B cell (primary cell): ENCODE measurements at regions of chr16 and their contacts with region 1.

Region 1: DNA sequence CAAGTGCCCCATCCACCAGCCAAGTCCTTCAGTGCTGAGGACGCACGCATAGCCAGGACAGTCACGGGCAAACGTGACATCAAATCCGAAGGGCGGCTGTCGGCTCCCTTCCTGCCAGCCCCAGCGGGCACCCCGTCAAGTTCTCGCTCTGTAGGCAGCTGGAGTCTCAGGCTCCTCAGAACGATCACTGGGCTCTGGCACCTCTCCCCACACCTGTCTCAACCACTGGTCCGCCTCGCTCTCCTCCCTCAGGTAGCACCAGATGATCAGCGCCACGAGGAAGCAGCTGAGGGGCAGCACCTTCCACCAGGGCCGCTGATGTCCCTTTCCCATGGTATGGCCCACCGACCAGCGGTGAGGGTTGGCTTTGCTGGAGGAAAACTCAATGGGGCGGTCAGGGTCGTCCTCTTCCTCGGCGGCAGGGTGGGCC is 421 bp downstream of the UQCC4 start:
- DNase-seq: no peak
- ATAC-seq: no peak
- H3K4me3 ChIP-seq: peak overlapping the region; percentile 74 to 95 (median 88)
- H3K4me3 Mint-ChIP-seq: peak overlapping the region; percentile 94
- H3K27ac ChIP-seq: peak overlapping the region; percentile 86 to 92
- H3K27ac Mint-ChIP-seq: peak overlapping the region; percentile 99
- H3K4me1 ChIP-seq: peaks cover 6 to 19% of the 10 kb centered on the region in 2 donors
- H3K4me1 Mint-ChIP-seq: peaks cover 22% of the 10 kb centered on the region
- H3K27me3 ChIP-seq: no peaks in the 10 kb centered on the region
- H3K27me3 Mint-ChIP-seq: no peaks in the 10 kb centered on the region
- CTCF ChIP-seq: no peak

Region 2: GRCh38 chr16:1258906-1259759 is 161.0 kb before region 1 on chr16:
- CTCF ChIA-PET with region 1: no interaction called
- POLR2A ChIA-PET with region 1: no interaction called
- intact Hi-C with region 1: no loop called
- DNase-seq: no peak
- ATAC-seq: peak; percentile 10
- H3K4me3 ChIP-seq: no peak overlapping the region
- H3K4me3 Mint-ChIP-seq: peak overlapping the region; percentile 49
- H3K27ac ChIP-seq: no peak overlapping the region
- H3K27ac Mint-ChIP-seq: no peak overlapping the region
- H3K4me1 ChIP-seq: peaks cover 6 to 8% of the 10 kb centered on the region in 2 donors
- H3K4me1 Mint-ChIP-seq: peaks cover 4% of the 10 kb centered on the region
- H3K27me3 ChIP-seq: peaks cover 0 to 62% (median 12%) of the 10 kb centered on the region in 4 experiments
- H3K27me3 Mint-ChIP-seq: peaks cover 21% of the 10 kb centered on the region
- CTCF ChIP-seq: no peak

Region 3: GRCh38 chr16:1308977-1309885 is 110.9 kb before region 1 on chr16 and contains the start of gene UBE2I:
- CTCF ChIA-PET with region 1: no interaction called
- POLR2A ChIA-PET with region 1: interaction called, 4 read pairs
- intact Hi-C with region 1: loop called (anchors 2 kb)
- DNase-seq: peak; percentile 100
- ATAC-seq: peak; percentile 74
- H3K4me3 ChIP-seq: peak within 1 kb of the TSS; percentile 80 to 90 (median 86)
- H3K4me3 Mint-ChIP-seq: peak within 1 kb of the TSS; percentile 99
- H3K27ac ChIP-seq: peak within 1 kb of the TSS; percentile 99 to 100
- H3K27ac Mint-ChIP-seq: peak within 1 kb of the TSS; percentile 100
- H3K4me1 ChIP-seq: peaks cover 41 to 65% of the 10 kb centered on the region in 2 donors
- H3K4me1 Mint-ChIP-seq: peaks cover 52% of the 10 kb centered on the region
- H3K27me3 ChIP-seq: no peaks in the 10 kb centered on the region
- H3K27me3 Mint-ChIP-seq: no peaks in the 10 kb centered on the region
- CTCF ChIP-seq: no peak
- total RNA-seq, gene UBE2I: 253 and 265 TPM in 2 replicates

Region 4: DNA sequence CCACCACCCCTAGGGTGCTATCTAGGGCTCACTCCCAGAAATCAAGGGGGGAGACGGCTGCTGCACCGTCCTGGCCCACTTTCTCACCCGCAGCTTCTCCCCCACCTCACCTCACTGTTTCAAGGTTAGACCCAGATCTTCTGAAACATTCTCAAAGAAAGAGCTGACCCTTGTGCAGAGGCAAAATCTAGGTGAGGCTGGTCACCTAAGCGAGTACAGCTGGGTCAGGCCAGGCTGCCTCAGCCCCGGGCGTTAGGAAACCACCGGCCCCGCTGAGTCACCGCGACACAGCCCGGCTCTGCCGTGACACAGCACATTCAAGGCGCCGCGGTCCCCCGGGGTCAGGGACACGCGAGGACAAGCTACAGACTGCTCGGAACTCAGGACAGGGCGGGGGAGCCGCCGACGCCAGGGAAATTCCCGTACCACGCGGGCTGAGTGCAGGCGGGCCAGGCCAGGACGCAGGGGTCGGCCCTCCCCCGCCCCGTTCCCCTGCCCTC is 41.3 kb before region 1 on chr16:
- CTCF ChIA-PET with region 1: interaction called, 3 read pairs
- POLR2A ChIA-PET with region 1: interaction called, 8 read pairs
- intact Hi-C with region 1: loop called (anchors 2 kb)
- DNase-seq: peak; percentile 75
- ATAC-seq: peak; percentile 55
- H3K4me3 ChIP-seq: peak overlapping the region in 3 of 5 experiments; percentile 39 to 52 (median 51)
- H3K4me3 Mint-ChIP-seq: peak overlapping the region; percentile 77
- H3K27ac ChIP-seq: peak overlapping the region in 1 of 2 donors; percentile 33
- H3K27ac Mint-ChIP-seq: peak overlapping the region; percentile 16
- H3K4me1 ChIP-seq: peaks cover 10 to 14% of the 10 kb centered on the region in 2 donors
- H3K4me1 Mint-ChIP-seq: peaks cover 15% of the 10 kb centered on the region
- H3K27me3 ChIP-seq: no peaks in the 10 kb centered on the region
- H3K27me3 Mint-ChIP-seq: no peaks in the 10 kb centered on the region
- CTCF ChIP-seq: no peak

Region 5: DNA sequence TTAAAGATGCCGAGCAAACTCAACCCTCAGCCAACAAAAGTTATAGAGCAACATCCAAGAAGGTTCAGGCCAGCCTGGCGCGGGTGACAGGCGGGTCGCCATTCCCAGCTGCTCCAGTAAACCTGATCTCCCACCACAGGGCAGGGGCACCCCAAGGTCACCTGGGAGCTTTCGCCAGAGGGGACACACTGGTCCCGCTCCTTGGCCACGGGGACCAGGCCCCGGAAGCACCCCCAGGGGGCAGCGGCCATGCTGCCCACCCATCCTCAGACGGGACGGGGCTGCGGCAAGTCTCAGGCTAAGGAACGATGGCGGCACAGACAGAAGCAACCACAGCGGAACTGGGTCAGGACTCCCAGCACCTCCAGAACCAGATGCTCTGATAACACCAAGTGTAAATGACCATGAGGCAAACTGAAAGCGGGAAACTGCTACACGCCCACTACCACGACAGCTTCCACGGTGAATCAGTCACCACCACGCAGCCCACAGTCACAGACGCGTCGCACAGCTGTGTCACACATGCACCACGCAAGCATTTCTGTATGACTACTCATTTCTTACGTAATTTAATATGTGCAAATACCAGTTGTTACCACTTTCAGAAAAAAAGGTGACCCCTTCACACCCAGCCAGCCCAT is 38.3 kb after region 1 on chr16:
- CTCF ChIA-PET with region 1: interaction called, 3 read pairs
- POLR2A ChIA-PET with region 1: interaction called, 13 read pairs
- intact Hi-C with region 1: no loop called
- DNase-seq: no peak
- ATAC-seq: peak; percentile 60
- H3K4me3 ChIP-seq: peak overlapping the region in 3 of 5 experiments; percentile 38 to 51 (median 50)
- H3K4me3 Mint-ChIP-seq: peak overlapping the region; percentile 81
- H3K27ac ChIP-seq: peak overlapping the region; percentile 98
- H3K27ac Mint-ChIP-seq: peak overlapping the region; percentile 97
- H3K4me1 ChIP-seq: peaks cover 31 to 34% of the 10 kb centered on the region in 2 donors
- H3K4me1 Mint-ChIP-seq: peaks cover 28% of the 10 kb centered on the region
- H3K27me3 ChIP-seq: no peaks in the 10 kb centered on the region
- H3K27me3 Mint-ChIP-seq: no peaks in the 10 kb centered on the region
- CTCF ChIP-seq: no peak

Region 6: DNA sequence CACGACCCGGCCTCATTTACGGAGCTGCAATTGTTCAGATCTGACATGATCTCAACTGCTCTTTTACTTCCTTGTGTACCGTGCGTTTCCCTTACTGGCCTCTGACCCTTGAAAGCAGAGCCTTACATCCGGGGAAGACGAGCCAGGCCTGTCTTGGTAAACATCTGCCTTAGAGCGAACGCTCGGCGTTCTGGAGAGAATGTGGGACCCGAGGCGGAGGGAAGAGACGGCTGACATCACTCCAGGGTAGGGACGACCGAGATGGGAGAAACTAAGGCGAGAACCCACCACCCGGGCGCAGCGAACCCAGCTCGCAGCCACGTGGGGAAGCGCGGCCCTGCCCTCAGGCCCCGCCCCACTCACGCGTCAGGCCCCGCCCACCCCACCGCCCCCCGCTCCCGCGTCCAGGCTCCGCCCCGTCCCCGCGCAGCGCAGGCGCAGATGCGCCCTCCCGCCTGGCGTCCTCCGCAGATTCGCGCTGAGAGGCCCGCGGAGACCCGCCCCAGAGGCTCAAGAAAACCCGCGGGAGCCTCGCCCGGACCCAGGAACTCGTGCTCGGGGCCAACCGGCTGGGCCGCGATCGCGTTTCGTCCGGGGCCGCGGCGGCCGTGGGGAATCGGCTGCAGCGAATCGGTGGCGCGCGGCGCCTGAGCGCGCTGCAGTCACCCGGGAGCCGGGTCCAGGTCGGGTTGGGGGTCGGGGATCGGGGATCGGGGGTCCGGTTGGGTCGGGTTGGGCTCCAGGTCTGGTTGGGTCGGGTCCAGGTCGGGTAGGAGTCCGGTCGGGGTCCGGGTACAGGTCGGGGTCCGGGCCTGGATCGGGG is 73.0 kb after region 1 on chr16 and contains the start of gene TELO2:
- CTCF ChIA-PET with region 1: no interaction called
- POLR2A ChIA-PET with region 1: interaction called, 21 read pairs
- intact Hi-C with region 1: loop called (anchors 1 kb)
- DNase-seq: peak; percentile 92
- ATAC-seq: peak; percentile 89
- H3K4me3 ChIP-seq: peak within 1 kb of the TSS; percentile 36 to 87 (median 75)
- H3K4me3 Mint-ChIP-seq: peak within 1 kb of the TSS; percentile 97
- H3K27ac ChIP-seq: peak within 1 kb of the TSS; percentile 95 to 96
- H3K27ac Mint-ChIP-seq: peak within 1 kb of the TSS; percentile 99
- H3K4me1 ChIP-seq: peaks cover 17 to 25% of the 10 kb centered on the region in 2 donors
- H3K4me1 Mint-ChIP-seq: peaks cover 17% of the 10 kb centered on the region
- H3K27me3 ChIP-seq: no peaks in the 10 kb centered on the region
- H3K27me3 Mint-ChIP-seq: no peaks in the 10 kb centered on the region
- CTCF ChIP-seq: no peak
- total RNA-seq, gene TELO2: 81.9 and 88.4 TPM in 2 replicates

Region 7: GRCh38 chr16:1782352-1783091 is 362.4 kb after region 1 on chr16 and contains the starts of genes NUBP2 and SPSB3:
- CTCF ChIA-PET with region 1: interaction called, 4 read pairs
- POLR2A ChIA-PET with region 1: interaction called, 7 read pairs
- intact Hi-C with region 1: loop called (anchors 2 kb)
- DNase-seq: peak; percentile 99
- ATAC-seq: peak; percentile 85
- H3K4me3 ChIP-seq: peak within 1 kb of the TSS; percentile 75 to 96 (median 83)
- H3K4me3 Mint-ChIP-seq: peak within 1 kb of the TSS; percentile 89
- H3K27ac ChIP-seq: peak within 1 kb of the TSS; percentile 47 to 76
- H3K27ac Mint-ChIP-seq: peak within 1 kb of the TSS; percentile 91
- H3K4me1 ChIP-seq: peaks cover 10 to 31% of the 10 kb centered on the region in 2 donors
- H3K4me1 Mint-ChIP-seq: peaks cover 22% of the 10 kb centered on the region
- H3K27me3 ChIP-seq: no peaks in the 10 kb centered on the region
- H3K27me3 Mint-ChIP-seq: no peaks in the 10 kb centered on the region
- CTCF ChIP-seq: no peak
- total RNA-seq, gene NUBP2: 50.2 and 52.6 TPM in 2 replicates
- total RNA-seq, gene SPSB3: 91.2 and 95.5 TPM in 2 replicates